Activated naive CD4-positive, alpha-beta T cell treated with anti-CD3 and anti-CD28 coated beads for 36 hours (primary cell): ENCODE measurements at regions of chrX and their contacts with region 1.

Region 1: DNA sequence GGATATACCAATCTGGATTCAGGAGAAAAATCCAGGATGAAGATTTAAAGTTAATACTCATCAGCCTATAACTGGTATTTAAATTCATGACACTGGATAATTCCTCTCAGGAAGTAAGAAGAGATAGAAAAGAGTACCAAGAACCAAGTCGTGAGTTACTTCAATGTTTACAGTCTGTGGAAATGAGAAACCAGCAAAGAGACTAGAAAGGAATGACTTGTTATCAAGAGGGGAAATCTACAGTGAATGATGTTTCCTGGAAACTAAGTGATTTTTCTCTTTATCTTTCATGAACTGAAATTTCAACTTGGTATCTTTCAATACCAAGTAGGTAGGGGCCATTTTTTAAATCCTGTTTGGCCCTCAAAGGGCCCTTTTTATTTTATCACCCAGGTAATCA is 217.9 kb upstream of the AFF2 start:
- DNase-seq: no peak
- H3K4me3 Mint-ChIP-seq: no peak overlapping the region
- H3K27ac Mint-ChIP-seq: peak overlapping the region; percentile 92
- H3K4me1 Mint-ChIP-seq: peaks cover 36% of the 10 kb centered on the region
- H3K27me3 Mint-ChIP-seq: no peaks in the 10 kb centered on the region

Region 2: GRCh38 chrX:147911192-147912022 is 371.1 kb before region 1 on chrX and contains the start of gene FMR1:
- CTCF ChIA-PET with region 1: no interaction called
- intact Hi-C with region 1: loop called (anchors 10 kb)
- DNase-seq: peak; percentile 94
- H3K4me3 Mint-ChIP-seq: peak within 1 kb of the TSS; percentile 93
- H3K27ac Mint-ChIP-seq: peak within 1 kb of the TSS; percentile 94
- H3K4me1 Mint-ChIP-seq: peaks cover 24% of the 10 kb centered on the region
- H3K27me3 Mint-ChIP-seq: no peaks in the 10 kb centered on the region
- total RNA-seq, gene FMR1: 24.5 to 25.7 TPM

Region 3: GRCh38 chrX:148270499-148270898 is 12.0 kb before region 1 on chrX:
- CTCF ChIA-PET with region 1: no interaction called
- intact Hi-C with region 1: loop called (anchors 1 kb)
- DNase-seq: no peak
- H3K4me3 Mint-ChIP-seq: no peak overlapping the region
- H3K27ac Mint-ChIP-seq: no peak overlapping the region
- H3K4me1 Mint-ChIP-seq: peaks cover 37% of the 10 kb centered on the region
- H3K27me3 Mint-ChIP-seq: no peaks in the 10 kb centered on the region

Region 4: DNA sequence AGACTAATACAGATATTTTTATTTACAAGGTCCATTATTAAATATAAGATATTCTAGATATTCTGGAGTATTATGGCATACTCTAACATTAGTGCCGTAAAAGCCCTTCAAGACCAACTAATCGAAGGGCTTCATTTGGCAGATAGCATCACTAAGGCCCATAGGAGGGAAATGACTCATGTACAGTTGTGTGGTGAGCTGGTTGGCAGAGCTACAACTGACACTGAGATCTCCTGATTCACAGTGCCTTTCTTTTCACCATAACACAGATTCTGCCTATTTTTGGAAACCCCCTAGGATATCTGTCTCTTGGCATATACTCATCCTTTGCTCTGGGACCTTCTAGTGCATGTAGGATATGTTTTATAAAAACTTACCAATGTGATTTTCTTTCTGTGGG is 16.2 kb after region 1 on chrX:
- CTCF ChIA-PET with region 1: no interaction called
- intact Hi-C with region 1: loop called (anchors 2 kb)
- DNase-seq: no peak
- H3K4me3 Mint-ChIP-seq: no peak overlapping the region
- H3K27ac Mint-ChIP-seq: no peak overlapping the region
- H3K4me1 Mint-ChIP-seq: peaks cover 26% of the 10 kb centered on the region
- H3K27me3 Mint-ChIP-seq: no peaks in the 10 kb centered on the region

Region 5: GRCh38 chrX:148310426-148311165 is 28.1 kb after region 1 on chrX:
- CTCF ChIA-PET with region 1: no interaction called
- intact Hi-C with region 1: loop called (anchors 2 kb)
- DNase-seq: peak; percentile 76
- H3K4me3 Mint-ChIP-seq: no peak overlapping the region
- H3K27ac Mint-ChIP-seq: peak overlapping the region; percentile 53
- H3K4me1 Mint-ChIP-seq: peaks cover 29% of the 10 kb centered on the region
- H3K27me3 Mint-ChIP-seq: no peaks in the 10 kb centered on the region

Region 6: GRCh38 chrX:148422531-148422930 is 140.0 kb after region 1 on chrX:
- CTCF ChIA-PET with region 1: no interaction called
- intact Hi-C with region 1: loop called (anchors 5 kb)
- DNase-seq: peak; percentile 6
- H3K4me3 Mint-ChIP-seq: no peak overlapping the region
- H3K27ac Mint-ChIP-seq: no peak overlapping the region
- H3K4me1 Mint-ChIP-seq: peaks cover 22% of the 10 kb centered on the region
- H3K27me3 Mint-ChIP-seq: no peaks in the 10 kb centered on the region

Region 7: GRCh38 chrX:149259241-149259640 is 976.7 kb after region 1 on chrX:
- CTCF ChIA-PET with region 1: no interaction called
- intact Hi-C with region 1: no loop called
- DNase-seq: no peak
- H3K4me3 Mint-ChIP-seq: no peak overlapping the region
- H3K27ac Mint-ChIP-seq: no peak overlapping the region
- H3K4me1 Mint-ChIP-seq: no peaks in the 10 kb centered on the region
- H3K27me3 Mint-ChIP-seq: no peaks in the 10 kb centered on the region